Dendritic cell treated with granulocyte-macrophage colony-stimulating factor and Interleukin-4, amounts not matched to agents 40 ng/mL and 50 ng/mL, for 4 days (primary cell): ENCODE measurements at regions of chr16 and their contacts with region 1.

Region 1: GRCh38 chr16:70523076-70523742 is at the start of gene COG4:
- H3K4me3 Mint-ChIP-seq: peak within 1 kb of the TSS; percentile 97
- H3K27ac Mint-ChIP-seq: peak within 1 kb of the TSS; percentile 98
- H3K4me1 Mint-ChIP-seq: peaks cover 40% of the 10 kb centered on the region
- H3K27me3 Mint-ChIP-seq: no peaks in the 10 kb centered on the region

Region 2: GRCh38 chr16:70380861-70381603 is 142.2 kb before region 1 on chr16:
- intact Hi-C with region 1: loop called (anchors 1 kb)
- H3K4me3 Mint-ChIP-seq: peak overlapping the region; percentile 94
- H3K27ac Mint-ChIP-seq: peak overlapping the region; percentile 87
- H3K4me1 Mint-ChIP-seq: peaks cover 32% of the 10 kb centered on the region
- H3K27me3 Mint-ChIP-seq: no peaks in the 10 kb centered on the region

Region 3: DNA sequence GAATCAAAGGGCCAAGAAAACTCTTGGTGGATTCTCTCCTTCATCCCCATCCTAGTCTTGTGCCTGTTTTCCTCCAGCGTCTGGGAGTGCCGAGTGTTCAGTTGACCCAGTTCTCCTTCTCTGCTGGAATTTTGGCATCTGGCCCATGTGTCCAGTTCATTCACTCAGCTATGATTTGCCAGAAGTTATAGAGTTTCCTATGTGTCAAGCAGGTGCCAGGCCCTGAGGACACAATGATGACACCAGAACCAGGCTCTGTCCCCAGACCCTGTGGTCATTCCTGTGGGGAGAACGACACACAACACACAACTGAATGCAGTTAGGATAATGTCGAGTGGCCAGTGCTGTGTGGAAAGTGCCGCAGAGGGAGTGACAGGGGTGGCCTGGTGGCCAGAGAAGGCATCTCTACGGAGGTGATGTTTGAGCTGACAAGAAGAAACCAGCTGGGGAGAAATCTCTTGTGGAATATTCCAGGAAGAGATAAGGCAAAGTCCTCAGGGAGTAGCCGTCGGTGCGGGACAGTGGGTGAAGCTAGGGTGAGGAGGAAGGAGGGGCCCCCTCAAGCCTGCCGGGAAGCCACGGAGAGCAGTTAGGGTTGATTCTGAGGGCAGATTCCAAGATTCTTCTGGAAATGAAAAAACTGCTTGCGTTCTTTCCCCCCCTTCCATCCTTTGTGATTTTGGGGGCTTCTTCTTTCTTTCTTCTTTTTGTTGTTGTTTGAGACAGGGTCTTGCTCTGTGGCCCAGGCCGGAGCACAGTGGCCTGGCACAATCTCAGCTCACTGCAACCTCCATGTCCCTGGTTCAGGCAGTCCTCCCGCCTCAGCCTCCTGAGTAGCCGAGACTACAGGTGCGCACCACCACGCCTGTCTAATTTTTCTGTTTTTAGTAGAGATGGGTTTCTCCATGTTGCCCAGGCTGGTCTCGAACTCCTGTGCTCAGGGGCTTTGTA is 87.3 kb after region 1 on chr16:
- intact Hi-C with region 1: no loop called
- H3K4me3 Mint-ChIP-seq: no peak overlapping the region
- H3K27ac Mint-ChIP-seq: no peak overlapping the region
- H3K4me1 Mint-ChIP-seq: no peaks in the 10 kb centered on the region
- H3K27me3 Mint-ChIP-seq: peaks cover 3% of the 10 kb centered on the region

Region 4: DNA sequence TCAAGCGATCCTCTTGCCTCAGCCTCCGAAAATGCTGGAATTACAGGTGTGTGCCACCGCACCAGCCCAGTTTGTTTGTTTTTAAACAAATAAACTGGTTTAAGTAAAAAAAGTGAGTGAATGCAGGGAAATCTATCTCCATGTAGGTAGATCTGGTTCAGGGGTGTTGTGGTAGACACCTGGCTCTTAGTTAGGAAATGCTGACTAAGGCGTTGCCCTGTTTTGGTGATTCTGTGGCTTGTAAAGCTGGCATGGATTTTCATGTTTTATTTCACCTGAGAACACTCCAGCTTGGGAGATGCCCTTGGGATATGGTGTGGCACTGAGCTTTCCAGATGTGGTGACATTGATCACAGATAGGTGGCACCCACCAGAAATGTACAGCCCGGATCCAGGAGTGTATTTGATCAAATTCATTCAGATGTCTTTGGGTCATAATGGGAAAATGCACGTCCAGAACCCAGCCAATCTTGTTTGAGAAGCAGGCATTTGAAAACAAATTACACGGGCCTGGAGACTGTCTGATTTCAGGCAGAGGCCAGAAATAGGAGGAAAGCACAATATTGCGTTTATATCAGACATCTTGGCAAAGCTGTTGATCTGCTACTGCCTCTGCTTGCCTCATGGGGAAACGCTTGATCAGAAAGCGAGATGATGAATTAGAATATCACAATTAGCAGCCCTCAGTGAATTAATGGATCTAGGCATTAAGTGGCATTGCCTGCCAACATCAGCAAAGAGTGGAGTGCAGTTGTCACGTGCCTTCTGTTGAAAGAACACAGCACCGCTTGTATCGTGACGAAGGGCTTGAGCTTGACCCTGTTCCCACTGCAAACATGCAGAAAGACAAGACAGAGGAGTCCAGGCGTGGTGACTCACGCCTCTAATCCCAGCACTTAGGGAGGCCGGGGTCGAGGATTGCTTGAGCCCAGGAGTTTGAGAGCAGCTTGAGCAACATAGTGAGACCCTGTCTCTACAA is 115.9 kb after region 1 on chr16:
- intact Hi-C with region 1: no loop called
- H3K4me3 Mint-ChIP-seq: no peak overlapping the region
- H3K27ac Mint-ChIP-seq: no peak overlapping the region
- H3K4me1 Mint-ChIP-seq: no peaks in the 10 kb centered on the region
- H3K27me3 Mint-ChIP-seq: no peaks in the 10 kb centered on the region